ENCODE measurements at regions of chr14 and their contacts with region 1.

Region 1: DNA sequence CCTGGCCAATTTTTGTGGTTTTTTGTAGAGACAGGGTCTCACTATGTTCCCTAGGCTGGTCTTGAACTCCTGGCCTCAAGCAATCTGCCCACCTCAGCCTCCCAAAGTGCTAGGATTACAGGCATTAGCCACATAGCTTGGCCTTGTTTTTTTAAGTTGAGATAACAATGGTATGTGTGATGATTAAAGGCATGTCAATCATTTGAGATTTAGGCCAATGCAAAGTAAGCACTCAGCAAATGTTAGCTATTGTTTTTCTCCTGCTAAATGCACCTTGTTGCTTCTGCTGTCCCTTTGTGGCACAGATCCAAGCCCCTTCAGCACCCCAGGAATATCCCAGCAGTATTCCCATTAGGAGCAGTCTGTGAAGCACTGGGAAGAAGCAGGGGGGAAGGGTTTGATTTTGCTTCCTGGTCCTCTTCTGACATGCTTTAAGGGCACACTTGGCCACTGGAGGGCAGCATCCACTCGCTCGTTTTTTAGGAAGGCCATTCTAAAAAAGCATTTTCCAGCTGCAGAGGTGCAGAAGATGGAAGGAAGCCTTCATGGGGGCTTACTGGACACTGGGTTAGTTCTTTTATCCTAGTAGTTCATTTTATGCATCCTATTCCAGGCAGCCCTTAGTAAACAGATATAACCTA is 70.2 kb upstream of the ZFP36L1 start:
- DNase-seq: peak; percentile 72
- H3K4me3 ChIP-seq: no peak overlapping the region
- H3K27ac ChIP-seq: no peak overlapping the region
- H3K4me1 ChIP-seq: no peaks in the 10 kb centered on the region
- H3K27me3 ChIP-seq: no peaks in the 10 kb centered on the region
- CTCF ChIP-seq: peak; percentile 51 to 76 (median 70)
- POLR2A ChIP-seq: no peak

Region 2: GRCh38 chr14:69079183-69079742 is 216.2 kb after region 1 on chr14:
- intact Hi-C with region 1: no loop called
- DNase-seq: no peak
- H3K4me3 ChIP-seq: no peak overlapping the region
- H3K27ac ChIP-seq: peak overlapping the region; percentile 53 to 64
- H3K4me1 ChIP-seq: peaks cover 6% of the 10 kb centered on the region
- H3K27me3 ChIP-seq: no peaks in the 10 kb centered on the region
- CTCF ChIP-seq: no peak
- POLR2A ChIP-seq: no peak

Region 3: GRCh38 chr14:69101331-69101826 is 238.3 kb after region 1 on chr14:
- intact Hi-C with region 1: loop called (anchors 2 kb)
- DNase-seq: peak; percentile 19
- H3K4me3 ChIP-seq: no peak overlapping the region
- H3K27ac ChIP-seq: peak overlapping the region in 1 of 2 donors; percentile 38
- H3K4me1 ChIP-seq: no peaks in the 10 kb centered on the region
- H3K27me3 ChIP-seq: no peaks in the 10 kb centered on the region
- CTCF ChIP-seq: peak in 3 of 4 experiments; percentile 38 to 65 (median 61)
- POLR2A ChIP-seq: no peak

Region 4: DNA sequence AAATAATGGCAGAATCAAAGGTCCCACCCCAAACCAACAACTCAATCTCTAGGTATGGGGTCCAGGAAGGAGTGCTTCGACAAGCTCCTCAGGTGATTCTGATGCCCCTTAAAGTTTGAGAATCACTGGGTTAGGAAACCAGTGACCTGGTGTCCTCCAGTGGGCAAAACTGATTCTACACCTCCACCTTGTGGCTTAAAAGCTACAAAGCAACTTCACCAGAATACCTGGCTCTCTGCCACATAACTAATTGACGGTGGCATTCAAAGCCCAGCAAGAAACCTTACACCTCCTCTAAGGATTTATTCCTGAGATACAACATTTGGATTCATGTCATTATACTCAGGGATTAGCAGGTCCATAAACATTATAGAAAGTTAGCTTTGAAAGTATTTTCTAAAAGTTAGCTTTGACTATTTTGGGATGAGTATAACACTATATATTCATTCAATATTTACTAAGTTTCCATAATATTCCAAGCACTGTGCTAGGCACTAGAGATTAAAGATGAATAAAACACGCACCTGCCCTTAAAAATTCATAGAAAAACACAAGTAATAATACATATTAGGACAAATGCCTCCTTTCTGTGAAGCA is 244.4 kb after region 1 on chr14:
- intact Hi-C with region 1: loop called (anchors 2 kb)
- DNase-seq: peak; percentile 54
- H3K4me3 ChIP-seq: no peak overlapping the region
- H3K27ac ChIP-seq: no peak overlapping the region
- H3K4me1 ChIP-seq: no peaks in the 10 kb centered on the region
- H3K27me3 ChIP-seq: no peaks in the 10 kb centered on the region
- CTCF ChIP-seq: peak in 3 of 4 experiments; percentile 62 to 81 (median 81)
- POLR2A ChIP-seq: no peak

Measured in prostate gland (tissue), 2 donors.